H1 (cell line): ENCODE measurements at regions of chr18 and their contacts with region 1.

Region 1: DNA sequence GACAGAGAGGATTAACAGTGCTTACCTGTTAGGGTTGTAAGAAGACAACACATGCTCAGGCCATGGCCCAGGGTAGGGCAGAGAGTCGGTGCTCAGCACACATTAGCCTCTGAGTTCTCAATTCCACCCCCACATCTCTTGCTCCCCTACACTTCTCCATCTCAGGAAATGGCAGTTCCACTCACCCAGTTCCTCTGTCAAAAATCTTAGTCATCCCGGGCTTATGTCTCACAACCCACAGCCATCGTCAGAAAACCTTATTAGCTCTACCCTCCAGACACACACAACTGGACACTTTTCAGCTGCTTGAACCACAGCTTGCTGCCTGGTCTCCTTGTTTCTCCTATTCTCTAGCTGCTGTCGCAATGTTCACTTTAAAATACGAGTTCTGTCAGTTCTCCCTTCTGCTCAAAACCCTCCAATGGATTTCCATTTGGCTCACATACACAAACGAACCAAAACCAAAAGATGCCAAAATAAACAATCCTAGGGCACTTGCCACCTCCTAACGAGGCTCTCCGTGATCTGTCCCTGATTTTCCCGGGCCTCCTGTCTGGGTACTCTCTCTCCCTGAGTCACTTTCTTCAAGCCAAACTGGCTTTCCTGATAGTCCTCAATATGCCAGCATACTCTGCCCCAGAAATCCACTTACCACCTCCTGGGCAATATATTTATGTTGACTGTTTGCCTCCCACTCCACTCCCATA is 89.7 kb downstream of the KCTD1 start:
- DNase-seq: no peak
- H3K4me3 ChIP-seq: no peak overlapping the region
- H3K27ac ChIP-seq: no peak overlapping the region
- H3K4me1 ChIP-seq: peaks cover 3 to 7% (median 6%) of the 10 kb centered on the region in 4 experiments; a peak in 6 of 7 replicates
- H3K27me3 ChIP-seq: peaks cover 0 to 7% (median 5%) of the 10 kb centered on the region in 4 experiments; a peak in 3 of 7 replicates
- CTCF ChIP-seq: no peak
- EP300 ChIP-seq: no peak
- POLR2A ChIP-seq: no peak
- RAD21 ChIP-seq: no peak

Region 2: DNA sequence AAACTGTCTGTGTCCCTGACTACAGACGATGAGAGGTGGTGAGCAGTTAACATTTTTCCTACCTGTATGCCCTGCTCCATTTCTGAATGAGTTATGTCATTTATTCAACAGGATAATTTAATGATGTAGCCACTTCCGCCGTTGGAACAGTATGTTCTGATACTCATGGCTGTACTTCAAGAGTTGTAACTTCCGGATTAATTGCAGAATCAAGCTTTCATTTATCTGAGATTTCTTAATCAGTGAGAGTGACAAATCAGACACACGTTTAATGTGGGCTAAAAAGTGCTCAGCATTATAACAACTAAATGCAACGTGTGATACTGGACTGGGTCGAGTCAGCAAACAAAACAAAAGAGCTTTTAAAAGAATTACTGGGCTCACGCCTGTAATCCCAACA is 18.0 kb before region 1 on chr18:
- CTCF ChIA-PET with region 1: interaction called, 10 read pairs
- POLR2A ChIA-PET with region 1: no interaction called
- DNase-seq: no peak
- H3K4me3 ChIP-seq: no peak overlapping the region
- H3K27ac ChIP-seq: no peak overlapping the region
- H3K4me1 ChIP-seq: peaks cover 0 to 3% (median 0%) of the 10 kb centered on the region in 4 experiments; a peak in 2 of 7 replicates
- H3K27me3 ChIP-seq: no peaks in the 10 kb centered on the region
- CTCF ChIP-seq: no peak
- EP300 ChIP-seq: no peak
- POLR2A ChIP-seq: no peak
- RAD21 ChIP-seq: no peak

Region 3: GRCh38 chr18:27585601-27586173 is 1127.0 kb after region 1 on chr18:
- CTCF ChIA-PET with region 1: no interaction called
- POLR2A ChIA-PET with region 1: no interaction called
- DNase-seq: no peak
- H3K4me3 ChIP-seq: no peak overlapping the region
- H3K27ac ChIP-seq: no peak overlapping the region
- H3K4me1 ChIP-seq: no peaks in the 10 kb centered on the region; a peak in 1 of 7 replicates
- H3K27me3 ChIP-seq: no peaks in the 10 kb centered on the region
- CTCF ChIP-seq: no peak
- EP300 ChIP-seq: no peak
- POLR2A ChIP-seq: no peak
- RAD21 ChIP-seq: no peak